IMR-90 (cell line): ENCODE measurements at regions of chr9 and their contacts with region 1.

Region 1: DNA sequence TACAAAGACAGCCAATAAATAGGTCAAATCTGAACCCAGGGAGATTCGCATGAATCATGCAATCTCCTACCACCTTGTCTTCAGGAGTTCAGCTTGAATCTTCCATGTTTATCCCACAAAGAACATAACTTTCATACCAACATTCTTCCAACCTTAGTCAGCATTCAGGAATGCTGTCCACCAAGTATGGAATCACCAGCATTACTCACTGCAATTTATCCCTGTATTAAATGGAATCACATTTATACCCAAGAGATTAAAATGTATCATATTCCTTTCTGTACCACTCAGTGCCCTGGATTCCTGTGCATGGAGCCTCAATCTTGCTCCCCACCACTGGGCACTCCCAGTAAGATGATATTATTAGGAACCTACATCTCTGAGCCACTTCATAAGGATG is 162.6 kb downstream of the GLIS3 start:
- DNase-seq: peak; percentile 97
- ATAC-seq: peak; percentile 75
- H3K4me3 ChIP-seq: no peak overlapping the region
- H3K27ac ChIP-seq: peak overlapping the region; percentile 75
- H3K4me1 ChIP-seq: peaks cover 23% of the 10 kb centered on the region
- H3K27me3 ChIP-seq: no peaks in the 10 kb centered on the region
- CTCF ChIP-seq: no peak
- POLR2A ChIP-seq: no peak
- RAD21 ChIP-seq: 0 out of 2 replicates have a peak, but pooled peaks have one; percentile 10

Region 2: DNA sequence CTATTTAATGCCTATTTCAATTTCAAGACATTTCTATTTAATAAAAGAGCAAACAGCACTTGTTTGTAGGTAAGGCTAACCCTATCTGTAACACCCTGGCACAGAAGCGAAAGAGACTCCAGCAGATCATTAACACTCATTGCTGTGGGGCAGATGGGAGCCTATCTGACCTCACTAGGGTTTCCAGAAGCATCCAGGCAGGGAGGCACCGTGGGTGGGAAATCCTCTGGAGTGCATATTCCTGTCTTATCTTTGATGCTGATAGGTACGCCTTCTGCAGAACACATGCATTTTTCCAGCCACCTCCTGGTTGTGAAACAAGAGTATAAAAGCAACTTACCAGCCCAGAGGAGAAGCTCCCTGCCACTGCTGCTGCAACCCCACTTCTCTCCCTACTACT is 71.1 kb before region 1 on chr9:
- CTCF ChIA-PET with region 1: no interaction called
- POLR2A ChIA-PET with region 1: no interaction called
- dilution Hi-C with region 1: no loop called
- in situ Hi-C with region 1: no loop called
- intact Hi-C with region 1: no loop called
- DNase-seq: no peak
- ATAC-seq: no peak
- H3K4me3 ChIP-seq: no peak overlapping the region
- H3K27ac ChIP-seq: no peak overlapping the region
- H3K4me1 ChIP-seq: peaks cover 4% of the 10 kb centered on the region
- H3K27me3 ChIP-seq: no peaks in the 10 kb centered on the region
- CTCF ChIP-seq: no peak
- POLR2A ChIP-seq: no peak
- RAD21 ChIP-seq: no peak

Region 3: GRCh38 chr9:4086119-4087090 is 50.8 kb before region 1 on chr9:
- CTCF ChIA-PET with region 1: interaction called, 3 read pairs
- POLR2A ChIA-PET with region 1: no interaction called
- dilution Hi-C with region 1: no loop called
- in situ Hi-C with region 1: no loop called
- intact Hi-C with region 1: loop called (anchors 1 kb)
- DNase-seq: peak; percentile 43
- ATAC-seq: no peak
- H3K4me3 ChIP-seq: no peak overlapping the region
- H3K27ac ChIP-seq: peak overlapping the region; percentile 42; the same call in 1 of the 2 replicates
- H3K4me1 ChIP-seq: peaks cover 12% of the 10 kb centered on the region
- H3K27me3 ChIP-seq: no peaks in the 10 kb centered on the region
- CTCF ChIP-seq: no peak
- POLR2A ChIP-seq: no peak
- RAD21 ChIP-seq: no peak

Region 4: DNA sequence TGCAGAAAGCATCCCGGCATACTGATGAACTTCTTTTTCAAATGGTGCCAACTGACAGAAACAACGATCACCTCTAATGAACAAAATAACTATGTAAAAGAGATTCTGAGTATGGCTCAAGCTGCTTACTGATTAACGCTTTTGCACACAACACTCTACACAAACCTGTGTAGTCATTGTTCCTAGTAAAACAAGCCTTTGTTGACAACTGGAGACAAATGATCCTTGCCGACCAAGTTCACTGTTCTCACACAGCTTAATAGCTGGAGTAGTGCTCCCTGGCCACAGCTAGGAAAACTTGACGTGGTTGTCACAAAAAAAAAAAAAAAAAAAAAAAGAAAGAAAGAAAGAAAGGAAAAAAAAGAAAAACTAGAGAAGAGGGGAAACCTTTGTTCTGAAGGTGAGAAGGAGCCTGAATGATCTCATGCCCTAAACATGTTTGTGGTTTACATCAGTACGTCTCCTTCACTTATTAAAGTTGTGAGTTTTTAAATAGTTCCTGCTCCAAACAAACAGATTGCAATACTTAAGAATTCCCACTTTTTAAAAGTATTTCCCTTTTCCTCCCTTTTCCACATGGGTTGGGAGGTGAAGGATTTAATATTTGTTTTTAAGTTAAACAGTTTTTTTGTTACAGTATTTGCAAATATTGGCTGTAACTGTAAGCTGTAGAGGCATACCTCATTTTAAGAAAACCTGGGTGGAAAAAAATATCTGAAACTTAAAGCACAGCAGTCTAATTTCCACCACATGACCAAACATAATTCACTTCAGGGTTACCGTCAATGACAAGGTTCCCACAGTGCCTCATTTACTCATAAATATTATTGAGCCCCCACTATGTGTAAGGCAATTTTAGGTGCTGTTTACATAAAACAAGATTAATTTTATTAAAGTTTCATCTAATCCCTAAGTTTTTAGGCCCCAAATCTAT is 98.9 kb after region 1 on chr9:
- CTCF ChIA-PET with region 1: no interaction called
- POLR2A ChIA-PET with region 1: interaction called, 10 read pairs
- dilution Hi-C with region 1: no loop called
- in situ Hi-C with region 1: no loop called
- intact Hi-C with region 1: no loop called
- DNase-seq: peak; percentile 62
- ATAC-seq: peak; percentile 28
- H3K4me3 ChIP-seq: no peak overlapping the region
- H3K27ac ChIP-seq: no peak overlapping the region
- H3K4me1 ChIP-seq: peaks cover 10% of the 10 kb centered on the region
- H3K27me3 ChIP-seq: no peaks in the 10 kb centered on the region
- CTCF ChIP-seq: no peak
- POLR2A ChIP-seq: no peak
- RAD21 ChIP-seq: no peak